CD8-positive, alpha-beta memory T cell (primary cell): ENCODE measurements at regions of chr6 and their contacts with region 1.

Region 1: DNA sequence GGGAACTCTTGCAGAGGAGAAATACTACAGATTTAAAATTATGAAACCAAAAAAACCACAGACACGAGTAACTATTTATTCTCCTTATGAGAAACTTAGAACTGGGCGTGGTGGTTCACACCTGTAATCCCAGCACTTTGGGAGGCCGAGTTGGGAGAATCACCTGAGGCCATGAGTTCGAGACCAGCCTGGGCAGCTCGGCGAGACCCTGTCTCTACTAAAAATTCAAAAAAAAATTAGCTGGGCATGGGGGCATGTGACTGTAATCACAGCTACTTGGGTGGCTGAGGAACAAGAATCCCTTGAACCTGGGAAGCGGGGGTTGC is 36.8 kb downstream of the SSR1 start:
- DNase-seq: no peak
- H3K4me3 ChIP-seq: no peak overlapping the region
- H3K4me3 Mint-ChIP-seq: no peak overlapping the region
- H3K27ac ChIP-seq: no peak overlapping the region
- H3K27ac Mint-ChIP-seq: peak overlapping the region in 1 of 8 donors; percentile 65
- H3K4me1 ChIP-seq: no peaks in the 10 kb centered on the region
- H3K4me1 Mint-ChIP-seq: peaks cover 6 to 8% (median 7%) of the 10 kb centered on the region in 3 donors
- H3K27me3 ChIP-seq: no peaks in the 10 kb centered on the region
- H3K27me3 Mint-ChIP-seq: no peaks in the 10 kb centered on the region

Region 2: GRCh38 chr6:7243179-7243981 is 32.8 kb before region 1 on chr6:
- CTCF ChIA-PET with region 1: no interaction called
- POLR2A ChIA-PET with region 1: no interaction called
- DNase-seq: peak in 3 of 5 donors; percentile 26 to 62 (median 52)
- H3K4me3 ChIP-seq: no peak overlapping the region
- H3K4me3 Mint-ChIP-seq: no peak overlapping the region
- H3K27ac ChIP-seq: no peak overlapping the region
- H3K27ac Mint-ChIP-seq: peak overlapping the region; percentile 2 to 74 (median 19)
- H3K4me1 ChIP-seq: peaks cover 8% of the 10 kb centered on the region
- H3K4me1 Mint-ChIP-seq: peaks cover 10 to 14% (median 10%) of the 10 kb centered on the region in 3 donors
- H3K27me3 ChIP-seq: no peaks in the 10 kb centered on the region
- H3K27me3 Mint-ChIP-seq: peaks cover 0 to 2% of the 10 kb centered on the region in 2 donors

Region 3: GRCh38 chr6:7615611-7616383 is 339.6 kb after region 1 on chr6:
- CTCF ChIA-PET with region 1: interaction called, 63 read pairs
- POLR2A ChIA-PET with region 1: no interaction called
- DNase-seq: peak in 2 of 5 donors; percentile 11 to 36
- H3K4me3 ChIP-seq: no peak overlapping the region
- H3K4me3 Mint-ChIP-seq: peak overlapping the region in 6 of 7 donors; percentile 1 to 52 (median 24)
- H3K27ac ChIP-seq: no peak overlapping the region
- H3K27ac Mint-ChIP-seq: peak overlapping the region in 2 of 8 donors; percentile 2 to 23
- H3K4me1 ChIP-seq: no peaks in the 10 kb centered on the region
- H3K4me1 Mint-ChIP-seq: peaks cover 7 to 13% (median 8%) of the 10 kb centered on the region in 3 donors
- H3K27me3 ChIP-seq: no peaks in the 10 kb centered on the region
- H3K27me3 Mint-ChIP-seq: peaks cover 1 to 17% of the 10 kb centered on the region in 2 donors